Dorsolateral prefrontal cortex (tissue), 120 donors: ENCODE measurements at regions of chr10 and their contacts with region 1.

Region 1: DNA sequence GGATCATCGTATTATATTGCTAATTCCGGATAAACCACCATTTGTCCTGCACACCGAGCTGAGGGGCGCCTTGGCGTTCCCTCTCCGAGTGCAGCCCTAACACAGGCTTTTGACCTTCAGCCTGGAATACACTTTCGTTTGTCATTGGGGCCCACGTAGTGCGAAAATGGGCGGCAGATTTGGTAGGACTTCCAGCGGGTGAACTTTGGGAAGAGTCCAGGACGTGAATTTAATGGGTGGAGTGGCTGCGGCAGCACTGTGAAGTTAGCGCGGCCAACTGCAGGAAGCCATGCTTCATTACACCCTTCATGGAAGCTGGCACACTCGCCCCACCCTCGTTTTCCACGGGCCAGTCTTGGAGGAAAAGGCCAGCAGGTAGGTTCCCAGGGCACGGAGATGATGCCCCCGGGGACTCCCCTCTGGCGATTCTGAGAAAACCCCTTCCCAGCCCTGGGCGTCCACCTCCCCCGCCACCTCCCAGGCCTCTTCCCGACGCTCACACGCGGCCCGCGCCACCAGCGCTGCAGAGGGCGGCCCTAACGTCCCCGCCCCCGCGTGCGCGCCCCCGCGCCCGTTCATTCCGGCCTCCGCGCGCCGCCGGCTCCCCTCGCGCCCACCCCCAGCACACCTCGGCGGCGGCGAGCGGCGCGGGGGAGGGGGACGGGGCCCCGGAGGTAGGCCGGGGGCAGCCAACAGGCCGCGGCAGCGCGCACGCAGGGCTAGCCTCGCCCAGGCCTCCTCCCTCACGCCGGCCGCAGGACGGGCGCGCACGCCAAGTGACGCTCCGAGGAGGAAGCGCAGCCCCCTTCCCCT is at the start of gene MLLT10:
- DNase-seq: peak; percentile 85 to 94 (median 92)
- H3K4me3 ChIP-seq: peak within 1 kb of the TSS; percentile 56 to 91 (median 80)
- H3K27ac ChIP-seq: peak within 1 kb of the TSS; percentile 92 to 100 (median 99)
- H3K27me3 ChIP-seq: no peaks in the 10 kb centered on the region
- CTCF ChIP-seq: peak in 26 of 56 donors; percentile 11 to 54 (median 29)
- total RNA-seq, gene MLLT10: 35.4 to 78.5 (median 55.3) TPM

Region 2: GRCh38 chr10:21732067-21732772 is 198.5 kb after region 1 on chr10:
- intact Hi-C with region 1: loop called in 1 of 2 experiments (anchors 10 kb)
- DNase-seq: peak in 8 of 10 donors; percentile 39 to 77 (median 52)
- H3K4me3 ChIP-seq: peak overlapping the region in 1 of 59 donors; percentile 17
- H3K27ac ChIP-seq: no peak overlapping the region
- H3K27me3 ChIP-seq: no peaks in the 10 kb centered on the region
- CTCF ChIP-seq: peak; percentile 33 to 93 (median 80)

Region 3: DNA sequence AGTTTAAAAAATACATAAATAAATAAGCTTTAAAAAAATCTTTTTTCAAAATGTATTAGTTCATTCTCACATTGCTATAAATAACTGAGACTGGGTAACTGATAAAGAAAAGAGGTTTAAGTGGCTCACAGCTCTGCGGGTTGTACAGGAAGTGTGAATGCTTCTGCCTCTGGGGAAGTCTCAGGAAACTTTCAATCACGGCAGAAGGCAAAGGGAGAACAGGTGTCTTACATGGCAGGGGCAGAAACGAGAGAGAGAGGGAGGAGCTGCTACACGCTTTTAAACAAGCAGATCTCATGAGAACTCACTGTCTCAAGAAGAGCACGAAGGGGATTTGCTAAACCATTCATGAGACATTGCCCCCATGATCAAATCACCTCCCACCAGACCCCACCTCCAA is 355.3 kb after region 1 on chr10:
- intact Hi-C with region 1: no loop called
- DNase-seq: no peak
- H3K4me3 ChIP-seq: no peak overlapping the region
- H3K27ac ChIP-seq: no peak overlapping the region
- H3K27me3 ChIP-seq: no peaks in the 10 kb centered on the region
- CTCF ChIP-seq: no peak

Region 4: DNA sequence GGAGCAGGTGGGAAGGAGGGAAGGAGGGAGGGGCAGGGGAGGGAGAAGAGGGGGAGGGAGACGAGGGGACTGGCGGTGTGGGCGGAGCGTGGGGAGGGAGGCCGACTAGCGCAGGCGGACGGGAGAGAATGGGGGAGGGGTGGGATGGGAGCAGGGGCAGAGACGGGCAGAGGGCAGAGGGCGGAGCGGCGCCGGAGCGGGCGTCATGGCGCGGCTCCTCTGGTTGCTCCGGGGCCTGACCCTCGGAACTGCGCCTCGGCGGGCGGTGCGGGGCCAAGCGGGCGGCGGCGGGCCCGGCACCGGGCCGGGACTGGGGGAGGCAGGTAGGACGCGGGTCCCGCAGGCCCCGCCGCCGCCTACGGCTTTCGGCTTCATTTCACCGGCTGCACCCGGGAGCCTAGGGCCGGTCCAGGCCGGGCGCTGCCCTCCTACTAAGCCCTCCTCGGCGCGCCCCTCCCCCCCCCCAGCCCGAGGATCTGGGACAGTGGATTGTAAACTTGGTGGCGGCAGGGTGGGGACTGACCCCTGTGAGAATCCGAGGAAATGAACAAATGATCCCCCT is 1561.8 kb after region 1 on chr10 and contains the start of gene MSRB2:
- intact Hi-C with region 1: loop called in 1 of 2 experiments (anchors 10 kb)
- DNase-seq: peak; percentile 74 to 93 (median 85)
- H3K4me3 ChIP-seq: peak within 1 kb of the TSS; percentile 64 to 95 (median 82)
- H3K27ac ChIP-seq: peak within 1 kb of the TSS; percentile 49 to 99 (median 93)
- H3K27me3 ChIP-seq: no peaks in the 10 kb centered on the region
- CTCF ChIP-seq: peak in 6 of 56 donors; percentile 6 to 33 (median 14)
- total RNA-seq, gene MSRB2: 18.8 to 48.7 (median 33.9) TPM